Activated CD4-positive, alpha-beta memory T cell treated with anti-CD3 and anti-CD28 coated beads, Interleukin-2, amount 10 ng/mL, durations not matched to agents 7 days and 5 days (primary cell): ENCODE measurements at regions of chr9 and their contacts with region 1.

Region 1: DNA sequence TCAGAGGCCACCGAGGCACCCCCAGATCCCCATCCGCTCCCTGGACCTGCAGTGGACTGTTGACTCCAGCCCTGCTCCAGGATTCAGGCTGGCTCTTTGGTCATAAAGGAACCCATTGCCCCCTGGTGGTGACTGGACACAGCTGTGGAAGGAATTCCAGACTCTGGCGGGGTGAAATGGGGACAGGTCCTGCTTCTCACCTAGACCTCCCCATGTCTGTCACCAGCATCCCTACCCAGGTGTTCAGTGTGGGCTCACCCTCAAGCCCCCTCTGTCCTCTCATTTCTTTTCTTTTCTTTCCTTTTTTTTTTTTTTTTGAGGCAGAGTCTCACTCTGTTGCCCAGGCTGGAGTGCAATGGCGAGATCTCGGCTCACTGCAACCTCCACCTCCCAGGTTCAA is 25.5 kb upstream of the STXBP1 start:
- DNase-seq: peak; percentile 67
- H3K4me3 Mint-ChIP-seq: no peak overlapping the region
- H3K27ac Mint-ChIP-seq: no peak overlapping the region
- H3K4me1 Mint-ChIP-seq: peaks cover 29% of the 10 kb centered on the region
- H3K27me3 Mint-ChIP-seq: peaks cover 11% of the 10 kb centered on the region

Region 2: GRCh38 chr9:127503947-127504782 is 82.4 kb before region 1 on chr9:
- CTCF ChIA-PET with region 1: interaction called, 14 read pairs
- POLR2A ChIA-PET with region 1: interaction called, 4 read pairs
- DNase-seq: peak; percentile 85
- H3K4me3 Mint-ChIP-seq: no peak overlapping the region
- H3K27ac Mint-ChIP-seq: peak overlapping the region; percentile 68
- H3K4me1 Mint-ChIP-seq: no peaks in the 10 kb centered on the region
- H3K27me3 Mint-ChIP-seq: no peaks in the 10 kb centered on the region

Region 3: DNA sequence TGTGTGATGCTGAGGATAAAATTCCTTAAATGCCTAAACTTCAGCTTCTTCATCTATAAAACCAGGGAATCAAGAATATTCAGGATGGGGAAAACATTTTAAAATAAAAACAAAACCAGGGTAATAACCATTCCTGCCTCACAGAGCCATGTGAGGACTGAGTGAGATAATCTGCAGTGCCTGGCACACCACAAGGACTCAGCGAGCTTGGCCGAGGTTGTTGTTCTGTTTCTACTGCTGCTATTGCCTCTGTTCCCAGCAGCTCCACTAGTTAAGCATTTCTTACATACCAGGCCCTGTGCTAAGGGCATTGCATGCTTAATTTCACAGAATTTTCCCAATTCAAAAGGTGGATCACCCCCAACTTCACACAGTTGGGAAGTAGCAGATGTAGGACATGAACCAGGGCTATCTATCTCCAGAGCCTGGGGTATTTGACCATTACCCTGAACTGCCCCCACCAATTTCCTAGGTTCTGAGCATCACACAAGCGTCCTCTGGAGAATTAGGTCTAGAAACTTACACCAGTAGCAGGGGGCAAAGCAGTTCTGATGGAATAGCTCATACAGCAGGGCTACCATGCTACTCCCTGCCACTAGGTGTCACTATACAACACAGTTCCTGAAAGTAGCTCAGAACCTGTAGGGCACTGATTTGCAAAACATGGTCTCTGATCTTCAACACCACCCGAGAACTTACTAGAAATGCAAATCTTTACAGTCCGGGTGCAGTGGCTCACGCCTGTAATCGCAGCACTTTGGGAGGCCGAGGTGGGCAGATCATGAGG is 60.9 kb before region 1 on chr9:
- CTCF ChIA-PET with region 1: interaction called, 40 read pairs
- POLR2A ChIA-PET with region 1: interaction called, 6 read pairs
- DNase-seq: peak; percentile 40
- H3K4me3 Mint-ChIP-seq: no peak overlapping the region
- H3K27ac Mint-ChIP-seq: no peak overlapping the region
- H3K4me1 Mint-ChIP-seq: peaks cover 5% of the 10 kb centered on the region
- H3K27me3 Mint-ChIP-seq: no peaks in the 10 kb centered on the region

Region 4: DNA sequence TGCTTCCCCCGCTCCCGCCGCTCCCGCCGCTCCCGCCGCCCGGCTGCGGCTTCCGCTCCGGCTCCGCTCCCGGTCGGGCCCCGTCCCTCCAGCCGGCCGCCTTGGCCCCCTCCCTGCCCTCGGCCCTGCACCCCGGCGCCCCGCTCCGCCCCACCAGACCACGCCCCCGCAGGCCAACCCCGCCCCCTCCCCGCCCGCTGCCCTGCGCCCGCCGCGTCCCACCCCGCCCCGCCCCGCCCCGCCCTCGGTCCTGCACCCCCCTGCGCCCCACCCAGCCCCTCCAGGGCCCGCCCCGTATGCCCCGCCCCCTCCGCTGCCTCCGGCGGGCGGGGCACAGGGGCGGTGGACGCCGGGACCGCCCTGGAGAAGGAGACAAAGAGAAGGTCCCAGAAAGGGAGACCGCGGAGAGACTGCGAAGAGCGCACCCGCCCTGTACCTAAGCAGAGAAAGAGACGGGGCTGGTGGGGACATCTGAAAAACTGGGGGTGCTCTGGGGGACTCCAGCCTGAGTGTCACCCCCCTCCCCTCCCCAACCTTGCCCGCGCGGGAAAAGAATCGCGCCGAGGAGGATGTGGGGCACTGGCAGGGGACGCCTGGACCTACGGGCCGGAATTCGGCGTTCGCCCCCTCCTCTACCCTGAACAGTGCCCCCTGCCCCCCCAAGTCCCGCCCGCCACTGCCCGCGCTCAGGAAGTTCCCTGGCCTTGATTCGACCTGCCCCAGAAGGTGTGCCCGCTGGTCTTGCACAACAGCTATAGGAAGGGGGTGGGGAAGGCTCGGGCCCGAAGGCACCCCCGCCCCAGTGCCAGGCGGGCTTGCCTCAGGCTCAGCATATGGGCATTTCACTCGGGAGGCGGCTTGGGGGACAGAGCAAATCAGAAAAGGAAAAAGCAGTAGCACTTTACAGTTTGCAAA is 17.3 kb before region 1 on chr9:
- CTCF ChIA-PET with region 1: interaction called, 12 read pairs
- POLR2A ChIA-PET with region 1: interaction called, 10 read pairs
- DNase-seq: peak; percentile 87
- H3K4me3 Mint-ChIP-seq: peak overlapping the region; percentile 87
- H3K27ac Mint-ChIP-seq: peak overlapping the region; percentile 96
- H3K4me1 Mint-ChIP-seq: peaks cover 75% of the 10 kb centered on the region
- H3K27me3 Mint-ChIP-seq: no peaks in the 10 kb centered on the region

Region 5: DNA sequence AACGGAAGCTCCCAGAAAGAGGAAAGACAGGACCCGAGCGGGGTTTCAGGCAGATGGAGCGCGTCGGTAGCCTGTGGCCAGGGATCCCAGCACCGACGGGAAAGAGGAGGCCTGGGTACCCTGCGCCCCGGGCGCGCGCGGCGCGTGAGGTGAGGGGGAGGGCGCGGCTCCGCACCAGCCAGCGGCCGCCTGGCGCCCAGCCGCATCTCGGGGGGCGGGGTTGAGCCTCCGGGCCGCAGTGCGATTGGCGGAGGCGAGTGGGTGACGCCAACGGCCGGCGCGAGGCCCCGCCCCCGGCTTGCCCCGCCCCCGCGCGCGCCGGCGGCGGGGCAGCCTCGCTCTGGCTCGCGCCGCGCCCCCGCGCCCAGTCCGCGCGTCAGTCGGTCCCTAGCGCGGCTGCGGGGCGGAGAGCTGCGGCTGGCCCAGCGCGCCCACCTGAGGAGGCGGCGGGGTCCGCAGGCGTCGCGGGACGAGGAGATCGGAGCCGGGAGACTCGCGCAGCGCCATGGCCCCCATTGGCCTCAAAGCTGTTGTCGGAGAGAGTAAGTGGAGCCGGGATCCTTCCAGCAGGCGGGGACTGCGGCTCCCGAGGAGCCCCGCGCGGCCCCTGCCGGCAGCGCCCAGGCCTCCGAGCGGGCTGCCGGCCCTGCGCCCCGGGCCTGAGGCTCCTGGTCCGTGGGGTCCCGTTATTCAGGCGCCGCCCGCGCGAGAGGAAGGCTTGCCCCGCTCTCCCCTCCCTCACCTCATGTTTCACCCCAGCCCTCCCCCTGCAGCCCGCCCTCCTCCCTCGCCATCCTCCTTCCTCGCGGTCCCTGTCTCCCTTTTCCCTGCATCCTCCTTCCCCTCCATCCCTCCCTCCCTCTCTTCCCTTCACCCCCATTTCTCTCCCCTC is 25.6 kb after region 1 on chr9 and contains the start of gene STXBP1:
- CTCF ChIA-PET with region 1: interaction called, 11 read pairs
- POLR2A ChIA-PET with region 1: interaction called, 3 read pairs
- DNase-seq: peak; percentile 89
- H3K4me3 Mint-ChIP-seq: peak within 1 kb of the TSS; percentile 84
- H3K27ac Mint-ChIP-seq: no peak within 1 kb of the TSS
- H3K4me1 Mint-ChIP-seq: peaks cover 37% of the 10 kb centered on the region
- H3K27me3 Mint-ChIP-seq: peaks cover 38% of the 10 kb centered on the region
- total RNA-seq, gene STXBP1: 23.2 to 23.4 TPM

Region 6: GRCh38 chr9:127916665-127917613 is 330.4 kb after region 1 on chr9 and contains the start of gene ST6GALNAC4:
- CTCF ChIA-PET with region 1: interaction called, 12 read pairs
- POLR2A ChIA-PET with region 1: no interaction called
- DNase-seq: peak; percentile 96
- H3K4me3 Mint-ChIP-seq: peak within 1 kb of the TSS; percentile 72
- H3K27ac Mint-ChIP-seq: peak within 1 kb of the TSS; percentile 65
- H3K4me1 Mint-ChIP-seq: peaks cover 65% of the 10 kb centered on the region
- H3K27me3 Mint-ChIP-seq: peaks cover under 1% of the 10 kb centered on the region
- total RNA-seq, gene ST6GALNAC4: 19.4 to 21.5 TPM

Region 7: DNA sequence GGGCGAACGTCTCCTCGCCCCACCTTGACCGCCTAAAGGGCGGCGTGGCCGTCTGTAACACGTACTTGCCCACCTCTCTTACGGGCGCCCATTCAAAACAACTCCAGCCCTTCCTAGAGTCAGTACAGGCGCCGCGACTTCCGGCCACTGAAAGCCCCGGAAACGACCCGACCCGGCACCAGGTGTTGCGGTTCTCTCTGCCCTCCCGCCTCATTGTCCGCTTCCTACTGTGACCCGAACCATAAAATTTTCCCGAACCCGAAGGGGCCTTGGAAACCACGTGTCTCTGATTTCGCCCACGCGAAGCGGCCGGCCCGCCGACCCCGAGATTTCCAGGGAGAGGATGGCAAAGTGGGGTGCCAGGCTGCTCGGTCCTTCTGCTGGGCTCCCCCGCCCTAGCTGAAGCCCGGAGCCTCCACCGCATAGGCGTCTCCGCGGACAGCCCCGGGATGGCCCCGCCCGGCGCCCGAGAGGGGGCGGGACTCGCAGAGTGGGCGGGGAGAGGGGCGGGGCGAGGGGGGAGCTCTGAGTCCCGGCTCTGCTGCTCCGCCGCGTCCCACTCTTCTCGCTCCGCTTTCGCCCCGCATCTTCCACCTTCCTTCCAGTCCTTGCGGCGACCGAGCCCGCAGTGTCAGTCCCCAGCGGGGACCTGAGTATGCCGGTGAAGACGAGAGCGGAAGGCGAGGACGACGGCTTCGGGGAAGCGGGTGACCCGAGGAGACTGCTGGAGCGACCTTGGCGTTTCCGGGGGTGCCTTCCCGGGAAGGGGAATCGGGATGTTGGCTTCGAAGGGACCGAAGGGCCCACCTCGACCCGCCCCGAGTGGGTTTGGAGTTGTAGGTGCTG is 541.7 kb after region 1 on chr9:
- CTCF ChIA-PET with region 1: no interaction called
- POLR2A ChIA-PET with region 1: no interaction called
- DNase-seq: peak; percentile 86
- H3K4me3 Mint-ChIP-seq: peak overlapping the region; percentile 91
- H3K27ac Mint-ChIP-seq: peak overlapping the region; percentile 96
- H3K4me1 Mint-ChIP-seq: peaks cover 36% of the 10 kb centered on the region
- H3K27me3 Mint-ChIP-seq: peaks cover 20% of the 10 kb centered on the region